A673 (cell line): ENCODE measurements at regions of chr3 and their contacts with region 1.

Region 1: GRCh38 chr3:156151824-156152428 is 31.5 kb downstream of the KCNAB1 start:
- DNase-seq: peak; percentile 85
- H3K4me3 ChIP-seq: no peak overlapping the region
- H3K27ac ChIP-seq: no peak overlapping the region
- H3K4me1 ChIP-seq: peaks cover 6% of the 10 kb centered on the region
- H3K27me3 ChIP-seq: no peaks in the 10 kb centered on the region
- CTCF ChIP-seq: peak; percentile 93

Region 2: GRCh38 chr3:155995525-155996351 is 156.2 kb before region 1 on chr3:
- CTCF ChIA-PET with region 1: no interaction called
- POLR2A ChIA-PET with region 1: no interaction called
- intact Hi-C with region 1: loop called (anchors 5 kb)
- DNase-seq: peak; percentile 65
- H3K4me3 ChIP-seq: no peak overlapping the region
- H3K27ac ChIP-seq: no peak overlapping the region
- H3K4me1 ChIP-seq: no peaks in the 10 kb centered on the region
- H3K27me3 ChIP-seq: no peaks in the 10 kb centered on the region
- CTCF ChIP-seq: peak; percentile 69

Region 3: GRCh38 chr3:156449712-156450574 is 298.0 kb after region 1 on chr3:
- CTCF ChIA-PET with region 1: no interaction called
- POLR2A ChIA-PET with region 1: no interaction called
- intact Hi-C with region 1: loop called (anchors 5 kb)
- DNase-seq: peak; percentile 39
- H3K4me3 ChIP-seq: no peak overlapping the region
- H3K27ac ChIP-seq: no peak overlapping the region
- H3K4me1 ChIP-seq: peaks cover 14% of the 10 kb centered on the region
- H3K27me3 ChIP-seq: no peaks in the 10 kb centered on the region
- CTCF ChIP-seq: peak; percentile 74

Region 4: DNA sequence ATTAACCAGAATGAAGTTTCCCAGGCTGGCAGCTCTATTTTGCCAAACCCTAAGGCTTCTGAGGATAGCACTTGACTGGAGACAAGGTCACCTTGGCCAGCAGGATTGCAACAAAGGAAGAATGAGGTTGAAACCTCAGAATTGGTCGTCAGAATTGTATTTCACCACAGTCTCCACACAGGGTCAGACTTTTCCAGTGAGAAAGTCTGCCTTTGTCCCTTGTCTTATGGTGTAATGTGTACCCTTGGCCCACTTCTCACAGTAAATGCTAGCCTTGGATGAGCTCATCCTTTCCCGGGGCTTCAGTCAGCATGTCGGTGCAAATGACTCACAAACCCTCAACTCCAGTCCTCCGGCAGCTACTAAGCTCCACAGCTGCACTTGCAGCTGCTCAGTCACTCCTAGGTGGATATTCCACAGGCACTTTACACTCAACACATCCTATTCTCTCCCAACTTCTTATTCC is 383.3 kb after region 1 on chr3:
- CTCF ChIA-PET with region 1: interaction called, 3 read pairs
- POLR2A ChIA-PET with region 1: no interaction called
- intact Hi-C with region 1: loop called (anchors 2 kb)
- DNase-seq: peak; percentile 92
- H3K4me3 ChIP-seq: no peak overlapping the region
- H3K27ac ChIP-seq: peak overlapping the region; percentile 48
- H3K4me1 ChIP-seq: peaks cover 48% of the 10 kb centered on the region
- H3K27me3 ChIP-seq: no peaks in the 10 kb centered on the region
- CTCF ChIP-seq: peak; percentile 33; the same call in 1 of the 2 replicates

Region 5: DNA sequence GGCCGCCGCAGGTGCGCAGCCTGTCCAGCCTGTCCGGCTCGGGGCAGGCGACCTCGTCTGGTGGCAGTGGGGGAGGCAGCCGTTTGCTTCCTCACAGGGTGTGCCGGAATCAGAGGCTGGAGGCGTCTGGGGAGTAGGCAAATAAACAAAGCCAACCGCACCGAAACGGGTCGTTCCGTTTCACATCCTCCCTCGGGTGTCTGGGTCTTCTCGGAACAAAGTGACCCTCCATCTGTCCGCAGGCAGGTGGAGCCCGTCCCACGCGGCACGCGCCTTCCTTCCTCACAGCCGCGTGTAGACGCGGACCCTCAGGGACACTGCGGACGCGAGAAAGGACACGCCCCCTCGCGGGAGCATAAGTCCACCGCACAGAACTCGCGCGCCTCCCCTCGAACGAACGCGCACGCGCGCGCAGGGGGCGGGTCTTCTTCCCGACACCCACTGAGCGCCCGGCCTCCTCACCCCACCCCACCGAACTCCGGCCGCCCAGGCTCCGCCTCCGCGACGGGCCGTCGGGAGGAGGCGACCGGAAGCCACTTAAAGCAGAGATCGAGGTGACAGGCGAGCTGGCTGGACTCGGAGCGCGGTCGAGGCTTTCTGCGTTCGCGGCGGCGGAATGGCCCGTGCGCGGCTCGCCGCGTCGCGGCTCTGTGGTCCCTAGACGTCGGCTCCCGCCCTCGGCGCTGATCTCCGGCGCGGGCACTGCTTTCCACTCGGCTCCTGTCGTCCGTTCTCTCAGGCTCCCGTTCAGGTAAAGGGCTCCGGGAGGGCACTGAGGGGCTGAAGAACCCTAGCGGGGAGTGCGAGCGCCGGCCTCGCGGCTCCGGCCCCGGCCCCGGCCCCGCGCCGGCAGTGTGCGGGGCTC is 522.4 kb after region 1 on chr3 and contains the start of gene TIPARP:
- CTCF ChIA-PET with region 1: no interaction called
- POLR2A ChIA-PET with region 1: no interaction called
- intact Hi-C with region 1: loop called (anchors 5 kb)
- DNase-seq: peak; percentile 99
- H3K4me3 ChIP-seq: peak within 1 kb of the TSS; percentile 89
- H3K27ac ChIP-seq: peak within 1 kb of the TSS; percentile 97
- H3K4me1 ChIP-seq: peaks cover 18% of the 10 kb centered on the region
- H3K27me3 ChIP-seq: no peaks in the 10 kb centered on the region
- CTCF ChIP-seq: peak; percentile 63
- total RNA-seq, gene TIPARP: 116 TPM in 2 replicates

Region 6: GRCh38 chr3:157136647-157137387 is 984.9 kb after region 1 on chr3:
- CTCF ChIA-PET with region 1: interaction called, 6 read pairs
- POLR2A ChIA-PET with region 1: no interaction called
- intact Hi-C with region 1: loop called (anchors 1 kb)
- DNase-seq: no peak
- H3K4me3 ChIP-seq: no peak overlapping the region
- H3K27ac ChIP-seq: peak overlapping the region; percentile 64
- H3K4me1 ChIP-seq: peaks cover 27% of the 10 kb centered on the region
- H3K27me3 ChIP-seq: no peaks in the 10 kb centered on the region
- CTCF ChIP-seq: no peak